ENCODE measurements at regions of chr6 and their contacts with region 1.

Region 1: DNA sequence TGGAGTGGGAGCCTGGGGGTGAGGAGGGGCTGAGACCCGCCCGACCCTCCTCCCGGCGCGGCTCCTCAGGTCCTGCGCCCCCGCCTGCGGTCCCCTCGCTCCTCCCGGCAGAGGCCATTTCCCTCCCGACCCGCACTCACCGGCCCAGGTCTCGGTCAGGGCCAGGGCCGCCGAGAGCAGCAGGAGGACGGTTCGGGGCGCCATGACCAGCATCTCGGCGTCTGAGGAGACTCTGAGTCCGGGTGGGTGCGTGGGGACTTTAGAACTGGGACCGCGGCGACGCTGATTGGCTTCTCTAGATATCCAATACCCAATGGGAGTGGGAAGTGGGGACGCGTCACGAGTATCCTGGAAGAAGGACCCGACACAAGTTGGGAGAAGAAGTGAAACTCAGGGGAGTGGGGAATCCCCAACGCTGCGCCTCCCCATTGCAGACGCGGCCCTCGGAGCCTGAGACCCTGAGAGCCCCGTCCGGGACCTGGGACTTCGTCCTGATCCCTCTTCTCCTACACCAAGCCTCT is at the start of gene HLA-B:
- DNase-seq: peak; percentile 73 to 97 (median 86)
- ATAC-seq: peak; percentile 78 to 84
- H3K4me3 Mint-ChIP-seq: peak within 1 kb of the TSS; percentile 97 to 100 (median 99)
- H3K27ac Mint-ChIP-seq: peak within 1 kb of the TSS; percentile 100
- H3K4me1 Mint-ChIP-seq: peaks cover 46 to 66% (median 58%) of the 10 kb centered on the region in 4 donors
- H3K27me3 Mint-ChIP-seq: peaks cover 0 to 3% (median 0%) of the 10 kb centered on the region in 5 donors
- polyA plus RNA-seq, gene HLA-B: 5,978 to 8,548 (median 7,722) TPM

Region 2: DNA sequence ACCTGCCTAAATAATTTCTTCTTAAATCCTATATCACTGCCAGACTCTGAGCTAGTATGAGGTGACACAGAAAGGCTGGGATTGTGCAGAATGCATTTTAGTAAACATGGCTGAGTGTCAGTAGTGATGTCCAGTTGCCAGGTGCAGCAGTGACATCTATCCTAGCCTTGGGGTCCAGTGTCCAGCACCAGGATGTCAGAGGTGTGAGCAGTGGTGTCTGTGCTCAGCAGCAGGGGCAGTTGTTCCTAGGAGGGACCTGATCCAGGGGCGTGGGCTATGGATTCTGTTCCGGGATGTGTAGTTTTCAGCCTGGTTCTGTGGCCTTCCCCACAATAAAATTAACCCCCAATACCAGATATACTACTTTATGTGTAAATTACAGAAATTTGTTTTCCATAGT is 91.1 kb before region 1 on chr6:
- POLR2A ChIA-PET with region 1: interaction called, 47 read pairs
- DNase-seq: peak in 1 of 10 donors; percentile 9
- ATAC-seq: peak in 1 of 2 donors; percentile 20
- H3K4me3 Mint-ChIP-seq: peak overlapping the region in 2 of 10 donors; percentile 8 to 59
- H3K27ac Mint-ChIP-seq: peak overlapping the region in 9 of 10 donors; percentile 14 to 87 (median 66)
- H3K4me1 Mint-ChIP-seq: peaks cover 28 to 53% (median 48%) of the 10 kb centered on the region in 4 donors
- H3K27me3 Mint-ChIP-seq: no peaks in the 10 kb centered on the region

Region 3: DNA sequence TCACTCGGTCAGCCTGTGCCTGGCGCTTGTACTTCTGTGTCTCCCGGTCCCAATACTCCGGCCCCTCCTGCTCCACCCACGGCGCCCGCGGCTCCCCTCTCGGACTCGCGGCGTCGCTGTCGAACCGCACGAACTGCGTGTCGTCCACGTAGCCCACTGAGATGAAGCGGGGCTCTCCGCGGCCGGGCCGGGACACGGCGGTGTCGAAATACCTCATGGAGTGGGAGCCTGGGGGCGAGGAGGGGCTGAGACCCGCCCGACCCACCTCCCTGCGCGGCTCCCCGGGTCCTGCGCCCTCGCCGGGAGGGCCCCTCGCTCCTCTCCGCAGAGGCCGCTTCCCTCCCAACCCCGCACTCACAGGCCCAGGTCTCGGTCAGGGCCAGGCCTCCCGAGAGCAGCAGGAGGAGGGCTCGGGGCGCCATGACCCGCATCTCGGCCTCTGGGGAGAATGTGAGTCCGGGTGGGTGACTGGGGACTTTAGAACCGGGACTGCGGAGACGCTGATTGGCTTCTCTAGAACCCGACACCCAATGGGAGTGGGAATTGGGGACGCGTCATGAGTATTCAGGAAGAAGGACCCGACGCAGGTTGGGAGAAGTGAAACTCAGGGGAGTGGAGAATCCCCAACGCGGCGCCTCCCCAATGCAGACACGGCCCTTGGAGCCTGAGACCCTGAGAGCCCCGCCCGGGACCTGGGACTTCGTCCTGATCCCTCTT is 85.2 kb before region 1 on chr6 and contains the start of gene HLA-C:
- POLR2A ChIA-PET with region 1: interaction called, 47 read pairs
- DNase-seq: peak; percentile 78 to 98 (median 93)
- ATAC-seq: peak; percentile 83 to 86
- H3K4me3 Mint-ChIP-seq: peak within 1 kb of the TSS; percentile 92 to 99 (median 96)
- H3K27ac Mint-ChIP-seq: peak within 1 kb of the TSS; percentile 98 to 100 (median 100)
- H3K4me1 Mint-ChIP-seq: peaks cover 33 to 78% (median 59%) of the 10 kb centered on the region in 4 donors
- H3K27me3 Mint-ChIP-seq: no peaks in the 10 kb centered on the region
- polyA plus RNA-seq, gene HLA-C: 2,582 to 3,026 (median 3,019) TPM